H1 (cell line): ENCODE measurements at regions of chr2 and their contacts with region 1.

Region 1: DNA sequence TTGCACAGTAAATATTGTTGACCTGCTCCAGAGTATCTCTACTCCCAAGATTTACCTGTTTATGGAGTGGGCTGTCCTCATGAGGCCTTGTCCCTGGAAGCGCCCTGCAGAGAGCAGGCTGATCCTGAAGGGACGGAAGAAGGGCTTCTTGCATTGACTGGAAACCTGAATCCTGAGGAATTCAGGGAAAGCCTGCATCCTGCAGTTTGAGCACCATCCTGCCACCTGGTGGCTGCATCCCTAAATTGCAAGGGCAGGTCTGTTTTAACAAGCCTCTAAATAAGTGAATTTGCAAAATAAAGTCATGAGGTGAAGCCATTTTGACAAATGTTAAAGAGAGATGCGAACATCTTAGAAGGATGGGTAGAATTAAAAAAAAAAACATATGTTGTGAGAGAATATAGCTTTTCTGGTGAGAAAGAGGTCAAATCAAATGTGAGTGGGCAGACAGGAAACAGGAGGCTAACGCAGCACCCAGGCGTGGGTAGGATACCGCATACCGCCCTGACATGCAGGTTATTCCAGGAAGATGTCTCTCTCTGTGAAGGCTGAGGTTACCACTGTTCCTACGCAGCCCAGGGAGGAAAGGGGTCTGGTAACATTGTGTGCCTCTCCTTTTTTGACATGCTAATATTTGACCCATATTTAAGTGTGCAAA is 754.9 kb downstream of the RNF144A start:
- DNase-seq: peak; percentile 92 to 96
- H3K4me3 ChIP-seq: no peak overlapping the region
- H3K27ac ChIP-seq: no peak overlapping the region
- H3K4me1 ChIP-seq: peaks cover 0 to 8% (median 0%) of the 10 kb centered on the region in 4 experiments; a peak in 3 of 7 replicates
- H3K27me3 ChIP-seq: no peaks in the 10 kb centered on the region
- CTCF ChIP-seq: peak; percentile 73 to 93 (median 79)
- EP300 ChIP-seq: no peak
- POLR2A ChIP-seq: no peak
- RAD21 ChIP-seq: peak; percentile 84 to 85

Region 2: GRCh38 chr2:7427293-7428060 is 244.7 kb before region 1 on chr2:
- CTCF ChIA-PET with region 1: interaction called, 24 read pairs
- POLR2A ChIA-PET with region 1: no interaction called
- DNase-seq: peak in 1 of 2 experiments; percentile 19
- H3K4me3 ChIP-seq: no peak overlapping the region
- H3K27ac ChIP-seq: no peak overlapping the region
- H3K4me1 ChIP-seq: peaks cover 8 to 20% (median 9%) of the 10 kb centered on the region in 4 experiments
- H3K27me3 ChIP-seq: peaks cover 0 to 2% (median 0%) of the 10 kb centered on the region in 4 experiments; a peak in 1 of 7 replicates
- CTCF ChIP-seq: peak in 2 of 3 experiments; percentile 58 to 71; a peak in 3 of 4 replicates
- EP300 ChIP-seq: no peak
- POLR2A ChIP-seq: no peak
- RAD21 ChIP-seq: peak; percentile 87 to 92

Region 3: DNA sequence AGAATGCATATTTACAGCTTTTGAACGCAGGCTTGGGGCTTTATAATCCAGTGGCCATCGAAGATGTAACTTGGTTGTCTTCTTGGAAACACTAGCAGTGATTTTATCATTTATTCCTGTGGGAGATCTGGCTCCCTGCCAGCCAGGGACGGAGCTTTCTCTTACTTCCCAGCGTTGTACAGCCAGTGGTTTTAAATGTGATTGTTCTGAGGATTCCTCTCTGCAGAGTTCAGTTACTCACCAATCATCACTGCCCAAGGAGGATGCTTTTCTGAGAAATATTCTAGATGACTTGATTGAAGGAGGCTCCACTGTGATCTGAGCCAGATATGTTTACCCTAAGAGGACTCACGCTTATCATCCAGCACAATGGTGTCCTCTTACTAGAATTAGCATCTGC is 10.7 kb before region 1 on chr2:
- CTCF ChIA-PET with region 1: interaction called, 20 read pairs
- POLR2A ChIA-PET with region 1: no interaction called
- DNase-seq: no peak
- H3K4me3 ChIP-seq: no peak overlapping the region
- H3K27ac ChIP-seq: no peak overlapping the region
- H3K4me1 ChIP-seq: peaks cover 0 to 4% (median 0%) of the 10 kb centered on the region in 4 experiments; a peak in 1 of 7 replicates
- H3K27me3 ChIP-seq: no peaks in the 10 kb centered on the region
- CTCF ChIP-seq: no peak
- EP300 ChIP-seq: no peak
- POLR2A ChIP-seq: no peak
- RAD21 ChIP-seq: no peak